CD4-positive, alpha-beta T cell (primary cell): ENCODE measurements at regions of chr17 and their contacts with region 1.

Region 1: GRCh38 chr17:77645072-77646045 is 313.1 kb upstream of the TNRC6C start:
- DNase-seq: peak; percentile 25 to 75 (median 52)
- ATAC-seq: peak; percentile 88
- H3K4me3 ChIP-seq: peak overlapping the region; percentile 49
- H3K4me3 Mint-ChIP-seq: peak overlapping the region; percentile 68
- H3K27ac ChIP-seq: no peak overlapping the region
- H3K27ac Mint-ChIP-seq: peak overlapping the region; percentile 77
- H3K4me1 ChIP-seq: peaks cover 25% of the 10 kb centered on the region
- H3K4me1 Mint-ChIP-seq: peaks cover 20% of the 10 kb centered on the region
- H3K27me3 ChIP-seq: no peaks in the 10 kb centered on the region
- H3K27me3 Mint-ChIP-seq: no peaks in the 10 kb centered on the region
- CTCF ChIP-seq: peak; percentile 57

Region 2: DNA sequence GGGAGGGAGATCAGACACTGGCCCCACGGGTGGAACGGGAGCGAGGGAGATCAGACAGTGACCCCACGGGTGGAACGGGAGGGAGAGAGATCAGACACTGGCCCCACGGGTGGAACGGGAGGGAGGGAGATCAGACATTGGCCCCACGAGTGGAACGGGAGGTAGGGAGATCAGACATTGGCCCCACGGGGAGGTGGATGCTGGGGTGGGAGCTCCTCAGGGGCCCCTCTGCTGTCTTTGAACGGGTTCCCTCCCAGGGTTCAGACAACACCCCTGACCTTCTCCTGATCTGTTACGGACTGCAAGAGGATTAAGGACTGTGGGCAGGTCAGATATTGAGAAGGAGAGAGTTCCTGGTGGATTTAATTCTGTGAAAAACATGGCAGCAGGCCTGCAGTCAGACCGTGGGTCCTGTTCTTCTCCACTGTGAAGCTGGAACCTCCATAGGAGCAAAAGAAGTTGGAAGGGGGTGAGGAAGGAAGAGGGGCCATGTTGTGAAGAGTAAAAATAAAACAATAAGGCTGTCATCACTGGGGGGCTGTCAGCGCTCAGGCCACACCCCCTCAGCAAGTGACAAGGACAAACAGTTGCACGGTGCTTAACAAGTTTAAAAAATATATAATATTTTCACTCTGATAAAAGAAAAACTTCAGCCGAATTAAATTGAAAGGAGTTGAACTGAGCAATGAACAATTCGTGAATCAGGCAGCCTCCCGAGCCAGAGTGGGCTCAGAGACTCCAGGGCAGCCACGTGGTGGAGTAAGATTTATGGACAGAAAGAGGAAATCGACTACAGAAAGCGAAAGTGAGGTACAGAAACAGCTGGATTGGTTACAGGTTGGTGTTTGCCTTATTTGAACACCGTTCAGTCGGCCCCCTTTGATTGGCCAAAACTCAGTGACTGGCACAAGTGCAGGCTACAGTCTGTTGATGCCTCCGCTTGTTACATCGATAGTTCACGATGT is 35.5 kb before region 1 on chr17:
- CTCF ChIA-PET with region 1: no interaction called
- POLR2A ChIA-PET with region 1: interaction called, 12 read pairs
- intact Hi-C with region 1: no loop called
- DNase-seq: peak; percentile 39 to 85 (median 60)
- ATAC-seq: peak; percentile 98
- H3K4me3 ChIP-seq: peak overlapping the region; percentile 32
- H3K4me3 Mint-ChIP-seq: peak overlapping the region; percentile 87
- H3K27ac ChIP-seq: peak overlapping the region; percentile 2 to 54
- H3K27ac Mint-ChIP-seq: peak overlapping the region; percentile 93
- H3K4me1 ChIP-seq: peaks cover 22% of the 10 kb centered on the region
- H3K4me1 Mint-ChIP-seq: peaks cover 27% of the 10 kb centered on the region
- H3K27me3 ChIP-seq: no peaks in the 10 kb centered on the region
- H3K27me3 Mint-ChIP-seq: no peaks in the 10 kb centered on the region
- CTCF ChIP-seq: no peak

Region 3: GRCh38 chr17:77619851-77620250 is 25.5 kb before region 1 on chr17:
- CTCF ChIA-PET with region 1: no interaction called
- POLR2A ChIA-PET with region 1: no interaction called
- intact Hi-C with region 1: no loop called
- DNase-seq: no peak
- ATAC-seq: no peak
- H3K4me3 ChIP-seq: no peak overlapping the region
- H3K4me3 Mint-ChIP-seq: no peak overlapping the region
- H3K27ac ChIP-seq: no peak overlapping the region
- H3K27ac Mint-ChIP-seq: no peak overlapping the region
- H3K4me1 ChIP-seq: peaks cover 7% of the 10 kb centered on the region
- H3K4me1 Mint-ChIP-seq: peaks cover 11% of the 10 kb centered on the region
- H3K27me3 ChIP-seq: no peaks in the 10 kb centered on the region
- H3K27me3 Mint-ChIP-seq: no peaks in the 10 kb centered on the region
- CTCF ChIP-seq: no peak

Region 4: GRCh38 chr17:77634710-77635109 is 10.6 kb before region 1 on chr17:
- CTCF ChIA-PET with region 1: no interaction called
- POLR2A ChIA-PET with region 1: no interaction called
- intact Hi-C with region 1: no loop called
- DNase-seq: no peak
- ATAC-seq: no peak
- H3K4me3 ChIP-seq: no peak overlapping the region
- H3K4me3 Mint-ChIP-seq: no peak overlapping the region
- H3K27ac ChIP-seq: no peak overlapping the region
- H3K27ac Mint-ChIP-seq: no peak overlapping the region
- H3K4me1 ChIP-seq: peaks cover 2% of the 10 kb centered on the region
- H3K4me1 Mint-ChIP-seq: no peaks in the 10 kb centered on the region
- H3K27me3 ChIP-seq: no peaks in the 10 kb centered on the region
- H3K27me3 Mint-ChIP-seq: no peaks in the 10 kb centered on the region
- CTCF ChIP-seq: no peak

Region 5: GRCh38 chr17:77690271-77691161 is 45.2 kb after region 1 on chr17:
- CTCF ChIA-PET with region 1: no interaction called
- POLR2A ChIA-PET with region 1: interaction called, 3 read pairs
- intact Hi-C with region 1: loop called in 1 of 2 experiments (anchors 10 kb)
- DNase-seq: peak in 6 of 14 experiments; percentile 12 to 47 (median 37)
- ATAC-seq: peak; percentile 39
- H3K4me3 ChIP-seq: peak overlapping the region; percentile 21
- H3K4me3 Mint-ChIP-seq: peak overlapping the region; percentile 13
- H3K27ac ChIP-seq: no peak overlapping the region
- H3K27ac Mint-ChIP-seq: no peak overlapping the region
- H3K4me1 ChIP-seq: peaks cover 39% of the 10 kb centered on the region
- H3K4me1 Mint-ChIP-seq: peaks cover 39% of the 10 kb centered on the region
- H3K27me3 ChIP-seq: peaks cover 0 to 5% of the 10 kb centered on the region in 2 experiments
- H3K27me3 Mint-ChIP-seq: peaks cover 10% of the 10 kb centered on the region
- CTCF ChIP-seq: no peak

Region 6: DNA sequence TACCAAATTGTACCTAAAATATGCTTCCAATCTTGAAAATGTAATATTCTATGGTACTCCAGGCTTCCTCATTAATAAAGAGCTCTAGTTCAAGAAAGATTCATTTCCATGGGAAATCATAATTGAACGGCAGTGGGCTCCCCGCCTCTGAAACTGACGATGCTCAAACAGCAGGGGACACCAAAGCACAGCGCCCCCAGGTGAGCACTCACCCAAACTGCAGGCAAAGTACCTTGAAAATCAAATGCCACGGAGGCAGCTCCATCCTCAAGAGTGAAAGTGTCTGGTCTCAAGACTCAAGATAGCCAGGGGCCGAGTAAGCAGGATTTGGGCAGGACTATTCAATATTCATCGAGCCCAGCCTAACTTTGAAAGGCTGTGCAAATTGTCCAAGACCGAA is 95.8 kb after region 1 on chr17:
- CTCF ChIA-PET with region 1: no interaction called
- POLR2A ChIA-PET with region 1: no interaction called
- intact Hi-C with region 1: loop called in 1 of 2 experiments (anchors 1 kb)
- DNase-seq: peak in 12 of 14 experiments; percentile 11 to 69 (median 28)
- ATAC-seq: peak; percentile 37
- H3K4me3 ChIP-seq: no peak overlapping the region
- H3K4me3 Mint-ChIP-seq: no peak overlapping the region
- H3K27ac ChIP-seq: no peak overlapping the region
- H3K27ac Mint-ChIP-seq: no peak overlapping the region
- H3K4me1 ChIP-seq: no peaks in the 10 kb centered on the region
- H3K4me1 Mint-ChIP-seq: no peaks in the 10 kb centered on the region
- H3K27me3 ChIP-seq: peaks cover 0 to 4% of the 10 kb centered on the region in 2 experiments
- H3K27me3 Mint-ChIP-seq: no peaks in the 10 kb centered on the region
- CTCF ChIP-seq: peak; percentile 60